PC-9 (cell line): ENCODE measurements at regions of chr9 and their contacts with region 1.

Region 1: GRCh38 chr9:134267881-134268724 is 58.2 kb upstream of the RXRA start:
- DNase-seq: peak in 1 of 2 experiments; percentile 48
- H3K4me3 ChIP-seq: no peak overlapping the region
- H3K27ac ChIP-seq: no peak overlapping the region
- H3K4me1 ChIP-seq: no peaks in the 10 kb centered on the region
- H3K27me3 ChIP-seq: peaks cover 85% of the 10 kb centered on the region
- CTCF ChIP-seq: no peak

Region 2: GRCh38 chr9:134243778-134244467 is 24.2 kb before region 1 on chr9:
- CTCF ChIA-PET with region 1: no interaction called
- POLR2A ChIA-PET with region 1: no interaction called
- intact Hi-C with region 1: no loop called
- DNase-seq: no peak
- H3K4me3 ChIP-seq: no peak overlapping the region
- H3K27ac ChIP-seq: no peak overlapping the region
- H3K4me1 ChIP-seq: no peaks in the 10 kb centered on the region
- H3K27me3 ChIP-seq: peaks cover 45% of the 10 kb centered on the region
- CTCF ChIP-seq: no peak

Region 3: DNA sequence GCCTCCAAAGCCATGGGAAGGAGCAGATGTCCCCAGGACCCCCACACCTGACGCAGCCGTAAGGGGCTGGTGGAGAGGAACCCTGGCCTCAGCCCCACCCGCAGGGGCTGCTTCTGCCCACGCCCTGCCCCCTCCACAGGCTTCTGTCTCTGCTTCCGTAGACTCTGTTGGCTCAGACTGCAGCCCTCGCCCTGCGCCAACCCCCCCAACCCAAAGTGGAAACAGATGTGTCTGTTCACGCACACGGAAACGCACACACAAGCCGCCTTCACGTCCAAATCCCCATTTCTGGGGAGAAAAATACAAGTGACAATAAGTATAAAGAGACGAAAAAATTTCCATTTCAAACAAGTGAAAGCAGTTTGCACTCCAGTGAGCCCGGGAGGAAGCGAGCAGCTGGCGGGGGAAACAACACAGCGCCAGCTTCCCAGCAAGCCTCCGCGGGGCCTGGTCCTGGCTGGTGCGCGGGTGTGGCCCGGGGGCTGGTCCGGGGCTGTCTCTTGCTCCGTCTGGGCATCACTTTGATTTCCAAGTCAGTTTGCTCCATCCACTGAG is 25.6 kb after region 1 on chr9:
- CTCF ChIA-PET with region 1: no interaction called
- POLR2A ChIA-PET with region 1: no interaction called
- intact Hi-C with region 1: no loop called
- DNase-seq: no peak
- H3K4me3 ChIP-seq: no peak overlapping the region
- H3K27ac ChIP-seq: no peak overlapping the region
- H3K4me1 ChIP-seq: no peaks in the 10 kb centered on the region
- H3K27me3 ChIP-seq: peaks cover 50% of the 10 kb centered on the region
- CTCF ChIP-seq: no peak

Region 4: GRCh38 chr9:134536101-134536900 is 268.2 kb after region 1 on chr9:
- CTCF ChIA-PET with region 1: no interaction called
- POLR2A ChIA-PET with region 1: interaction called, 22 read pairs
- intact Hi-C with region 1: no loop called
- DNase-seq: peak in 1 of 2 experiments; percentile 29
- H3K4me3 ChIP-seq: no peak overlapping the region
- H3K27ac ChIP-seq: no peak overlapping the region
- H3K4me1 ChIP-seq: no peaks in the 10 kb centered on the region; the same call in 1 of the 2 replicates
- H3K27me3 ChIP-seq: peaks cover 77% of the 10 kb centered on the region
- CTCF ChIP-seq: no peak